PC-3 (cell line): ENCODE measurements at regions of chr5 and their contacts with region 1.

Region 1: DNA sequence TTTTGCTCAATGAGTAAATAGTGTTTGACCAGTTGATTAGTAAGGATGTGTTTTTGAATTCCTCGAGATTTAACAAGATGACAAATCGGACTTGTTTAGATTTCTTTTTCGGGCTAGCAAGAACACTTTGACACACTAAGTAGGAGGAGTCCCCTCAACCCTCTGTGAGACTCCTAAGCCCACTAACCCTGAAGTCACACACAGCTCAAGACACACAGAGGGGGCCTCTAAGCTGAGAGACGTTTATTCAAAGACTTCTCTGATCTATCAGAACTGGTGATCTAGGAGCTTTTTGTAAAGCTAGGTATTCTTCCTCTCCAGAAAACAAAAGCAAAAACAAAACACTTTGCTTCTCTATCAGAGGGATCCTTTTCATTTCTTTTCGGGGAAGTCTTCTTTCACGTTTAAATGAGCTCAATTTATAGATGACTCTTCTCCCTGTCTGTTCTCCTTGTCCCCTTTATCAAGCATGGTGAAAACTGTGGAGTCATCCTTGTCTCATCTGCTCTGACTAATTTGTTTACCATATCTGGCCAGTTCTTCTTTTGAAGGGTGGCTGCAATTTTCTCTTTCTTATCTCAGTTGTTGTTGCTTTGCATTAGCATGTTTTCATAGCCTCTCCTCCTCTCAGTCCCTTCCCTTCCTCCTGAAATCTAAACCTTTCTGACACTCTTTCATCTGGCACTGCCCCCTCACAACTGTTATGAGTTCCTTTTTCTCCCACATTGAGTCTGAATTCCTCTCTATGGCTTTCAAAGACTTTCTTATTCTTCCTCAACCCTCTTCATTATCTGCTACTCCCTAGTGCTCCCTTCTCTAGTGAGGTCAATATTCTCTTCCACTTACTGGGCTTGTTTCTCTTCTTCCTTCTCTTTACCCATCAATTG is 68.5 kb upstream of the RAI14 start:
- DNase-seq: peak; percentile 76
- ATAC-seq: peak; percentile 6
- H3K4me3 ChIP-seq: peak overlapping the region; percentile 45
- H3K27ac ChIP-seq: peak overlapping the region; percentile 99
- H3K4me1 ChIP-seq: peaks cover 68% of the 10 kb centered on the region
- H3K27me3 ChIP-seq: no peaks in the 10 kb centered on the region
- CTCF ChIP-seq: no peak

Region 2: GRCh38 chr5:34486160-34486848 is 101.3 kb before region 1 on chr5:
- CTCF ChIA-PET with region 1: interaction called, 3 read pairs
- POLR2A ChIA-PET with region 1: no interaction called
- intact Hi-C with region 1: loop called (anchors 1 kb)
- DNase-seq: peak; percentile 94
- ATAC-seq: peak; percentile 37
- H3K4me3 ChIP-seq: peak overlapping the region; percentile 6; the same call in 1 of the 2 replicates
- H3K27ac ChIP-seq: peak overlapping the region; percentile 90
- H3K4me1 ChIP-seq: peaks cover 52% of the 10 kb centered on the region
- H3K27me3 ChIP-seq: no peaks in the 10 kb centered on the region
- CTCF ChIP-seq: peak; percentile 96

Region 3: GRCh38 chr5:34598177-34598794 is 10.7 kb after region 1 on chr5:
- CTCF ChIA-PET with region 1: no interaction called
- POLR2A ChIA-PET with region 1: no interaction called
- intact Hi-C with region 1: loop called (anchors 1 kb)
- DNase-seq: peak; percentile 93
- ATAC-seq: peak; percentile 90
- H3K4me3 ChIP-seq: no peak overlapping the region
- H3K27ac ChIP-seq: peak overlapping the region; percentile 81
- H3K4me1 ChIP-seq: peaks cover 36% of the 10 kb centered on the region
- H3K27me3 ChIP-seq: no peaks in the 10 kb centered on the region
- CTCF ChIP-seq: no peak

Region 4: DNA sequence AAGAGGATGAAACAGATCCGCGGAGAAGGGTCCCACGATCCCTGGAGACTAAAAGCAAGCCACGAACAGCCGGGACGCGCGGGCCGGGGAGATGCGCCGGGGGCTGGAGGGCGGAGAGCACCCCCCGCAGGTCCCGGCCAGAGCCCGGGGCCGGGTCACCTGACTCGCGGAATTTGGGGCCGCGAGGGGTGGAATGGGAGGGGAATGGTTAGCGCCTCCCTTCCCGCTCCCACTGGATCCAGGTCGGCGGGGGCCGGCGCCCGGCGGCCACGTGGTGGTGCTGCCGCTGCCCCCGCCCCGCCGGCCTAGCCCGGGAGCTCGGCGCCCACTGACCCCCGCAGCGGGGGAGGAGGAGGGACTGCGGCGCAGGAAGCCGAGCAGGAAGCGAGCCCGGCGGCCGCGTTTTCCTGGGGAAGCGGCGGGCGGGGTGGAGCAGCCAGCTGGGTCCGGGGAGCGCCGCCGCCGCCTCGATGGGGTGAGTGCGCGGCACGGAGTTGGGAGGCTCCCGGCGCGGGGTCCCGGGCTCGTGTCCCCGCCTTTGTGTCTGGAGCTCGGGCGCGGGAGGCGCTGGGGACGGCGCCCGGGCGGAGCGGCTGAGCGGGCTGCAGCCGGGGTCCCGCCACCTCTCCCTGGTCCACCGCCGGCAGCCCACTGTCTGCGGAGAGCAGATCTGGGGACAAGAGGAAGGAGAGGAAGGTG is 68.6 kb after region 1 on chr5 and contains the start of gene RAI14:
- CTCF ChIA-PET with region 1: no interaction called
- POLR2A ChIA-PET with region 1: interaction called, 8 read pairs
- intact Hi-C with region 1: loop called (anchors 1 kb)
- DNase-seq: peak; percentile 86
- ATAC-seq: peak; percentile 71
- H3K4me3 ChIP-seq: peak within 1 kb of the TSS; percentile 97
- H3K27ac ChIP-seq: peak within 1 kb of the TSS; percentile 89
- H3K4me1 ChIP-seq: peaks cover 37% of the 10 kb centered on the region
- H3K27me3 ChIP-seq: no peaks in the 10 kb centered on the region
- CTCF ChIP-seq: no peak
- total RNA-seq, gene RAI14: 54.4 and 73.5 TPM in 2 replicates

Region 5: GRCh38 chr5:34838785-34839714 is 251.5 kb after region 1 on chr5 and contains the start of gene TTC23L:
- CTCF ChIA-PET with region 1: no interaction called
- POLR2A ChIA-PET with region 1: interaction called, 3 read pairs
- intact Hi-C with region 1: loop called (anchors 5 kb)
- DNase-seq: peak; percentile 90
- ATAC-seq: peak; percentile 95
- H3K4me3 ChIP-seq: peak within 1 kb of the TSS; percentile 72
- H3K27ac ChIP-seq: peak within 1 kb of the TSS; percentile 11
- H3K4me1 ChIP-seq: peaks cover 4% of the 10 kb centered on the region; the same call in 1 of the 2 replicates
- H3K27me3 ChIP-seq: no peaks in the 10 kb centered on the region
- CTCF ChIP-seq: no peak
- total RNA-seq, gene TTC23L: 0.84 TPM in 1 of 2 replicates, not detected in the other